Activated naive CD4-positive, alpha-beta T cell treated with anti-CD3 and anti-CD28 coated beads for 36 hours (primary cell): ENCODE measurements at regions of chr1 and their contacts with region 1.

Region 1: DNA sequence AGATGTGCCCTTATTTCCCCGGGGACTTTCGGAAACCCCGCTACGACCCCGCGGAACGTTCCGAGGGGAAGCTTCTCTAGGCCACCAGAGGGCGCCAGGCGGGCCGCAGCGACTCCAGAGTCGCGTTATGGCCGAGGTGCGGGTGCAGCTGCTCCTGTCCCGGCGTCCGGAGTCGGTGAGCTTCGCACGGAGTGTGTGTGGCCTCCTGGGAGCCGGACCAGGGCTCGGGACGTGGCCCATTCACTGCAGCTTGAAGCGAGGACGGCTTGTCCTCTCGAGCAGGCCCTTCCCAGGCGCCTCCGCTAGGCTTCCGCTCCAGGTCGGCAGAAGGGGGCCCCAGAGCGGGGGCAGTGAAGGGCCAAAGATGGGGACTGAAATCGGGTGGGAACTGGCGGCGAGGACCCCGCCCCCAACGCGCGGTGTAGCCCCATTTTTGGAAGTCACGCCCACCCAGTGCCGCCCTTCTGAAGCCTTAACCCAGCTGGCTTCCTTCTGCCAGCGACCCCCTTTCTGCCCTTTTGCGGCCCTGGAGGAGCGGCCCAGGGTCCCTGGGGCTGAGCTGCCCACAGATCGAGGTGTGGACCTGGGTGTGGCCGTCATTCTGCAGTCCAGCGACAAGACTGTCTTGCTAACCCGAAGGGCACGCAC is at the start of gene NUDT17:
- DNase-seq: peak; percentile 80
- H3K4me3 Mint-ChIP-seq: no peak within 1 kb of the TSS
- H3K27ac Mint-ChIP-seq: peak within 1 kb of the TSS; percentile 46
- H3K4me1 Mint-ChIP-seq: peaks cover 15% of the 10 kb centered on the region
- H3K27me3 Mint-ChIP-seq: no peaks in the 10 kb centered on the region
- total RNA-seq, gene NUDT17: 3.2 to 3.4 TPM

Region 2: GRCh38 chr1:145858894-145859490 is 13.4 kb after region 1 on chr1 and contains the start of gene PIAS3:
- CTCF ChIA-PET with region 1: interaction called, 116 read pairs
- intact Hi-C with region 1: no loop called
- DNase-seq: peak; percentile 84
- H3K4me3 Mint-ChIP-seq: peak within 1 kb of the TSS; percentile 87
- H3K27ac Mint-ChIP-seq: peak within 1 kb of the TSS; percentile 83
- H3K4me1 Mint-ChIP-seq: peaks cover 9% of the 10 kb centered on the region
- H3K27me3 Mint-ChIP-seq: no peaks in the 10 kb centered on the region
- total RNA-seq, gene PIAS3: 19.1 to 19.6 TPM

Region 3: DNA sequence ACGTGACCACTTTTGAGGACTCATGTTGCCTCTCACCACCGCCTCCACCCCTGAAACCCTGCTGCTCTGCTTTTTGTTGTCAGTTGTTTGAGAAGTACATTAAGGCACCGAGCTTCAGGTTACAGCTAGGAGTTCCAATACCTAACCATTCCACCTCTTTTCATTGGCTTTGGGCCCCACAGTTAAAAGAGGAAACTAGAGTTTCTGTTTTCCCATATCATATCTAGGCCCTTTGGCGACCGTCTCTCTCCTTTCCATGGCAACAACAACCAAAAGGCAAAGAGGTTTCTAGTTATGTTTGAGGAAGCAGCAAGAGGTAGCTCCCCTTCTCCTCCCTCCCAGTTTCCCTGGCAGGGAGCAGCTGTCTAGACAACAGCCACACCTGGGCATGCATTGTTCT is 34.1 kb after region 1 on chr1:
- CTCF ChIA-PET with region 1: interaction called, 38 read pairs
- intact Hi-C with region 1: no loop called
- DNase-seq: no peak
- H3K4me3 Mint-ChIP-seq: no peak overlapping the region
- H3K27ac Mint-ChIP-seq: no peak overlapping the region
- H3K4me1 Mint-ChIP-seq: peaks cover 1% of the 10 kb centered on the region
- H3K27me3 Mint-ChIP-seq: peaks cover 12% of the 10 kb centered on the region

Region 4: GRCh38 chr1:145891587-145892485 is 46.2 kb after region 1 on chr1:
- CTCF ChIA-PET with region 1: interaction called, 18 read pairs
- intact Hi-C with region 1: no loop called
- DNase-seq: peak; percentile 80
- H3K4me3 Mint-ChIP-seq: no peak overlapping the region
- H3K27ac Mint-ChIP-seq: no peak overlapping the region
- H3K4me1 Mint-ChIP-seq: peaks cover 1% of the 10 kb centered on the region
- H3K27me3 Mint-ChIP-seq: no peaks in the 10 kb centered on the region

Region 5: DNA sequence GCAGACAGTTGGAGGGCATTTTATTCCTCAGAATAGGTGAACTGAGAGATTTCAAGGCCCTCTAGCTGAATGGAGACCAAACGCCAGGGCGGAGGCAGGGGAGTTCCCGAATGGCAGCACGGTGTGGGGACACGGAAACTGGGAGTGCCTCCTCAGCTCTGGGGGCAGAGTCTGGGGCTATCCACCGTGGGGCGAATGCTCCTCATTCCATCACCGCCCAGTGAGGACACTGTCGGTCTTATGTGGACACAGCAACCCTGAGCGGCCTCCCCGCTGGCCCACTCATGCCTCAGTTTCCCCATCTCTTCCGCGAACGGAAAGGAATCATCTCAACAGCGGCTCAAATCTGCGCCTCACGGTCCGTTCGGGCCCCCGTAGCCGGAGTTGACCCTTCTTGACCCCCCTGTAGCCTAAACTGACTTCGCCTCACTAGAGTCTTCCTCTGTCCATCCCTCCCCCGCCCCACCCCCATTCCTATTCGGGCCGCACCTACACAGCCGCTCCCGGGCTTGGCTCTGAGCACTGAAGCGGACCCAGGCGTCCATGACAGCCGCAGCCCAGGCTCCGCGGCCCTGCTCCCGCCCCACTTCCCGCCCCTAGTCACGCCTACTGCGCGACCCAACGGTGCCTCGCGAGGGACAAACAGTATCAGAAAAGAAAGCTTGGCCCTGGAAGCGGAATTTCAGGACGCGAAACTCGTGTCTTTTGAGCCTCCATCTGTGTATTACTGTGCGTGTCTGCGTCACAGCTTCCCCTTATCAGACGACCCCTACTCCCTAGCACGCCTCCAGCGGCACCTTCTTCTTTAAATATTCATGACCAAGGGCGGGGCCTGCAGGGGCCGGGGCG is 72.7 kb after region 1 on chr1 and contains the start of gene PEX11B:
- CTCF ChIA-PET with region 1: interaction called, 76 read pairs
- intact Hi-C with region 1: loop called (anchors 2 kb)
- DNase-seq: peak; percentile 94
- H3K4me3 Mint-ChIP-seq: peak within 1 kb of the TSS; percentile 89
- H3K27ac Mint-ChIP-seq: peak within 1 kb of the TSS; percentile 93
- H3K4me1 Mint-ChIP-seq: peaks cover 39% of the 10 kb centered on the region
- H3K27me3 Mint-ChIP-seq: no peaks in the 10 kb centered on the region
- total RNA-seq, gene PEX11B: 18.0 to 19.0 TPM

Region 6: DNA sequence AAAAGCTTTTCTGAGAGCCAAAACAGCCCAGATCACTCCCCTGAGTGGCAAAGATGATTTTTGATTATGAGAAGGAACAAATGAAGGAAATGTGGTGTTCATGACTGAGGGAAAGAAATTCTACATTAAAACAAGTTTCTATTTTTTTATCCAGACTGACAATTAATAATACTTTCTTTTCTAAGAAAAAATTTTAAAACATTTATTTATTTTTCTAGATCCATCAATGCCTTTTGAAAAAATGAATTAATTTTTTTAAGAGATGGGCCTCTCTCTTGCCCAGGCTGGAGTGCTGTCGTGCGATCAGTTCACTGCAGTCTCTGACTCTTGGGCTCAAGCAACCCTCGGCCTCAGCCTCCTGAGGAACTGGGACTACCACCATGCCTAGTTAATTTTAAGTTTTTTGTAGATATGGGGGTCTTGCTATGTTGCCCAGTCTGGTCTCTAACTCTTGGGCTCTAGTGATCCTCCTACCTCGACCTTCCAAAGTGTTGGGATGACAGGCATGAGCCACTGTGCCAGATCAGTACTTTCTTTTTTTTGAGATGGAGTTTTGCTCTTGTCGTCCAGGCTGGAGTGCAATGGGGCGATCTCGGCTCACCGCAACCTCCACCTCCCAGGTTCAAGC is 162.0 kb after region 1 on chr1:
- CTCF ChIA-PET with region 1: interaction called, 23 read pairs
- intact Hi-C with region 1: no loop called
- DNase-seq: no peak
- H3K4me3 Mint-ChIP-seq: no peak overlapping the region
- H3K27ac Mint-ChIP-seq: peak overlapping the region; percentile 93
- H3K4me1 Mint-ChIP-seq: peaks cover 38% of the 10 kb centered on the region
- H3K27me3 Mint-ChIP-seq: no peaks in the 10 kb centered on the region

Region 7: DNA sequence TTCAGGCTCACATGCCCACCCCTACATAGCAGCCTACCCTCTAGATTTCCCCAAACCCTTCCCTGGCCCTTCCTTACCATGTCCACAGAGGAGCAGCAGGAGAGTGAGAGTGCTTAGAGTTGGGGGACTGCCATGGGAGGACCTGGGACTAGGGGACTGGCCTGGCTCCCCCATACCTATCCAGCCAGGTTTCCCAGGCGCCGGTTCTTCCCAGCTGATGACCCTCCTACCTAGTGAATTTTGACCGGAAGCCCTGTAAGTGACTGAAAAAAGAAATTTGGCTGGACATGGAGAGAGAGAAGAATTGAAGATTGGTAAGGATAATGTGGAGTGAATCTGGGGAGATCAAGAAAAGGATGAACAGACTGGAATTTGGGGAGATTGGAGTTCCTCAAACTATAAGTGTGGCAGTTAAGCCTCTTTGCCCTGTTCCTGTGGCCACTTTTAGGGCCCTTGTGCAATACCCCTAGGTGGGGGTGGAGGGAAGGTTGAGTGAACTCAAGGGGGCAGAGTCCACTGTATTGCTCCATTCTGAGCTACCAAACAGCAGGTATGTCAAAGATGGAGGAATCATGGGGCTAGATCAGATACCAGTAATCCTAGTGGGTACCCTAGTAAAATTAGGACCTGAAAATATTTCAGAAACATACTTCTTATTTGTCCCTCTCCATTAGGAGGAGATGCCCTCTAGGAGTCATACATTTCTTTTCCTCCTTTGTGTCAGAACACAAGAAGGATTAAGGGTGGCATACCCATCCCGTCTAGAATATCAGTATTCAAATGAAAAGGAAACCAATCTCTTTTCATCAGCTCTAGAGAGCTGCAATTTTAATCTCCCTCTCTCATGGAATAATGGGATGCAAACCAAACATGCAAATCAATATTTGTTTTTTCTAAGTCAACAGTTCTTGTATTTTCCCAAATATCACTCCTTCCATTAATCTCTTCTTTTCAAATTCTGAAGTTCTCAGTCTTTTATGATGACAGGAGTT is 174.7 kb after region 1 on chr1:
- CTCF ChIA-PET with region 1: interaction called, 12 read pairs
- intact Hi-C with region 1: no loop called
- DNase-seq: no peak
- H3K4me3 Mint-ChIP-seq: no peak overlapping the region
- H3K27ac Mint-ChIP-seq: no peak overlapping the region
- H3K4me1 Mint-ChIP-seq: peaks cover 8% of the 10 kb centered on the region
- H3K27me3 Mint-ChIP-seq: peaks cover 34% of the 10 kb centered on the region